Activated naive CD4-positive, alpha-beta T cell treated with anti-CD3 and anti-CD28 coated beads for 36 hours (primary cell): ENCODE measurements at regions of chr3 and their contacts with region 1.

Region 1: GRCh38 chr3:101544161-101544850 is 17.4 kb upstream of the TRMT10C start:
- DNase-seq: no peak
- H3K4me3 Mint-ChIP-seq: no peak overlapping the region
- H3K27ac Mint-ChIP-seq: no peak overlapping the region
- H3K4me1 Mint-ChIP-seq: peaks cover 29% of the 10 kb centered on the region
- H3K27me3 Mint-ChIP-seq: no peaks in the 10 kb centered on the region

Region 2: DNA sequence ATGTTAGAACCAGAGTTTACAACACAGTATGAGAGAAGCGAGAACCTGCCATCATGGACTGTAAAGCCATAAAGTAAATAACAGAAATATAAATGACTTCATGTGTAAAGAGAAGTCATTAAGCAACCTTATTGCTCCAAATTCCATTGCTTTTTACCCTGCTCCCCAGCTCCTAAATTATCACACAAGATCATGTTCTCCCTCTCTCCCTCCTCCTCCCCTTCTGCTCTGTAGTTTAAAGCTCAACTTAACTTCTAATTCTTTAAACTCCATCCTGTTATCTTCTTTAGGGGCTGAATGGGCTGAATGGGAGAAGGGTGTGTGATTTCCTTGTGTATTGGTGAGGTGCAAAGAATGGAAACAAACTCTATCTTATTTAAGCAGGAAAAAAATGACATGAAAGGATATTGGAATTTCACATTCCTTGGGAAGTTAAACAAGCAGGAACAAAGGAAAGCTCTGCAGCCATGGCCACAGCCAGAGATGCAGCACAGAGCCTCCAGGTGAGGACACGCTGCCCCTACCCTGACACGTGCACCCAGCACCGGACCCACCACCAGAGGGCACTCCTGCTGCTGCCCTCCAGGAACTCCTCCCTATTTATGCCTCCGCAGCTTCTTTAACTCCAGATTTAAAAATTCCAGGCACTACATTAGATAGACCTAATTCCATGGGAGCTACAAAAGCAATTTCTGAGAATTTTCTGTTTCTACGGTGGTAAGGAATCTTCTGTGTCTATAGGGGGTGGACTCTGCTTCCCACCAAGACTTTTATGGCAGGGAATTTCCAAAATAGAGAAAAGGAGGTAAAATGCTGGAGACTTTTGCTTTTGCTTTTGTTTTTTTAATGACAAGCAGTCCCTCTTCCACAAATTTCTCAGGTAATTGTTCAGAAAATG is 474.2 kb before region 1 on chr3:
- CTCF ChIA-PET with region 1: no interaction called
- intact Hi-C with region 1: loop called (anchors 1 kb)
- DNase-seq: peak; percentile 84
- H3K4me3 Mint-ChIP-seq: no peak overlapping the region
- H3K27ac Mint-ChIP-seq: no peak overlapping the region
- H3K4me1 Mint-ChIP-seq: peaks cover 6% of the 10 kb centered on the region
- H3K27me3 Mint-ChIP-seq: peaks cover 17% of the 10 kb centered on the region

Region 3: DNA sequence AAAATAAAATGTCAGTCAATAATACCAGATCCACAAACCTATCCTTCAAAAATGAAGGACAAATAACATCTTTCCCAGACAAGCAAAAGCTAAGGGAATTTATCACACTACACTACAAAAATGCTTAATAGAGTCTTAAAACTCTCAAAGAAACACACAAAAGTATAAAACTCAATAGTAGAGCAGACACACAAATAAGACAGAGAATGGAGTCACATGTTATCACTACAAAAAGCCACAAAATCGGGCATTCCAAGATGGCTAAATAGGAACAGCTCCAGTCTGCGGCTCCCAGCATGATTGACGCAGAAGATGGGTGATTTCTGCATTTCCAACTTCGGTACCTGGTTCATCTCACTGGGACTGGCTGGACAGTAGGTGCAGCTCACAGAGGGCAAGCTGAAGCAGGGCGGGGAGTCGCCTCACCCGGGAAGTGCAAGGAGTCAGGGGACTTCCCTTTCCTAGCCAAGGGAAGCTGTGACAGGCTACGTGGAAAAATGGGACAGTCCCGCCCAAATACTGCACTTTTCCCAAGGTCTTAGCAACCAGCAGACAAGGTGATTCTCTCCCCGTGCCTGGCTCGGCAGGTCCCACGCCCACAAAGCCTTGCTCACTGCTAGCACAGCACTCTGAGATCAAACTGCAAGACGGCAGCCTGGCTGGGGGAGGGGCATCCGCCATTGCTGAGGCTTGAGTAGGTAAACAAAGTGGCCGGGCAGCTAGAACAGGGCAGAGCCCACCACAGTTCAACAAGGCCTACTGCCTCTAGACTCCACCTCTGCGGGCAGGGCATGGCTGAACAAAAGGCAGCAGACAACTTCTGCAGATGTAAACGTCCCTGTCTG is 77.6 kb before region 1 on chr3:
- CTCF ChIA-PET with region 1: no interaction called
- intact Hi-C with region 1: loop called (anchors 2 kb)
- DNase-seq: peak; percentile 90
- H3K4me3 Mint-ChIP-seq: peak overlapping the region; percentile 71
- H3K27ac Mint-ChIP-seq: peak overlapping the region; percentile 88
- H3K4me1 Mint-ChIP-seq: peaks cover 57% of the 10 kb centered on the region
- H3K27me3 Mint-ChIP-seq: no peaks in the 10 kb centered on the region

Region 4: GRCh38 chr3:101531473-101532086 is 12.7 kb before region 1 on chr3:
- CTCF ChIA-PET with region 1: no interaction called
- intact Hi-C with region 1: loop called (anchors 1 kb)
- DNase-seq: peak; percentile 55
- H3K4me3 Mint-ChIP-seq: no peak overlapping the region
- H3K27ac Mint-ChIP-seq: peak overlapping the region; percentile 79
- H3K4me1 Mint-ChIP-seq: peaks cover 36% of the 10 kb centered on the region
- H3K27me3 Mint-ChIP-seq: no peaks in the 10 kb centered on the region

Region 5: DNA sequence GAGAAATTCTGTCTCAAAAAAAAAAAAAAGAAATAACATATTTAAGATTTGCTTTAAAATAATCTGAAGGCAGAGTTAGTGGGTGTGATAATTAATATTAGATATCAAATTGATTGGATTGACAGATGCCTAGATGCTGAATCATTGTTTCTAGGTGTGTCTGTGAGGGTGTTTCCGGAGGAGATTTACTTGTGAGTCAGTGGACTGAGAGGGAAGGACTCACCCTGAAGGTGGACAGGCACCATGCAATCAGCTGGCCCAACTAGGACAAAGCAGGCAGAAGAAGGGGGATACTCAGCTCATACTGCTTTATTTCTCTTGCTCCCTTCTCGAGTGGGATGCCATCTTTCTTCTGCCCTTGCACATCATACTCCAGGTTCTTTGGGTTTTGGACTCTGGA is 158.9 kb after region 1 on chr3:
- CTCF ChIA-PET with region 1: no interaction called
- intact Hi-C with region 1: no loop called
- DNase-seq: no peak
- H3K4me3 Mint-ChIP-seq: no peak overlapping the region
- H3K27ac Mint-ChIP-seq: no peak overlapping the region
- H3K4me1 Mint-ChIP-seq: no peaks in the 10 kb centered on the region
- H3K27me3 Mint-ChIP-seq: no peaks in the 10 kb centered on the region